OCI-LY7 (cell line): ENCODE measurements at regions of chr6 and their contacts with region 1.

Region 1: GRCh38 chr6:12011276-12012076 is 636 bp upstream of the HIVEP1 start:
- DNase-seq: peak; percentile 96
- H3K4me3 ChIP-seq: peak overlapping the region; percentile 97
- H3K27ac ChIP-seq: peak overlapping the region; percentile 39
- H3K4me1 ChIP-seq: peaks cover 28% of the 10 kb centered on the region
- CTCF ChIP-seq: no peak

Region 2: GRCh38 chr6:10534419-10534762 is 1477.1 kb before region 1 on chr6:
- CTCF ChIA-PET with region 1: no interaction called
- POLR2A ChIA-PET with region 1: no interaction called
- intact Hi-C with region 1: loop called (anchors 5 kb)
- DNase-seq: peak; percentile 87
- H3K4me3 ChIP-seq: peak overlapping the region; percentile 89
- H3K27ac ChIP-seq: peak overlapping the region; percentile 95
- H3K4me1 ChIP-seq: peaks cover 71% of the 10 kb centered on the region
- CTCF ChIP-seq: no peak

Region 3: GRCh38 chr6:11994875-11995461 is 16.5 kb before region 1 on chr6:
- CTCF ChIA-PET with region 1: no interaction called
- POLR2A ChIA-PET with region 1: interaction called, 4 read pairs
- intact Hi-C with region 1: loop called (anchors 1 kb)
- DNase-seq: no peak
- H3K4me3 ChIP-seq: no peak overlapping the region
- H3K27ac ChIP-seq: no peak overlapping the region
- H3K4me1 ChIP-seq: no peaks in the 10 kb centered on the region
- CTCF ChIP-seq: no peak

Region 4: DNA sequence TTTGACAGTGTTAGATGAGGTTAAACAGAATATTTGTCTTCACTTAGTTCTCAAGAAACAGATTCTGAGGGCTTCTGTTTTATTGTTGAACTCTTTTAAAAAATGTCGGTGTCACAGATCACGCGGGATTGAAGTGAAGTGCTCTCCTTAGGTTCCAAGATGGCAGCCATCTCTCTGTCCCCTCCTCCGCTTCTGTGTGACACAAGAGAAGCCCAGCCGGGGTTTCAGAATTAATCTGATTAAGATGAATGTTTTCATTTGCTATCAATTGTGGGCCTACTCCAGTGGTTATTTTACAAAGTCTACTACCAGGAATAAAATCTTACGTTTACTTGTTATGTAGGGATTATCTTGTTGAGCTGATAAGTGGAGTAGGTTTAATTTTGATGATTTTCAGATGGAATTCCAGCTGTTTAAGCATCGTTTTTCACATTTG is 11.5 kb after region 1 on chr6:
- CTCF ChIA-PET with region 1: no interaction called
- POLR2A ChIA-PET with region 1: interaction called, 10 read pairs
- intact Hi-C with region 1: no loop called
- DNase-seq: no peak
- H3K4me3 ChIP-seq: no peak overlapping the region
- H3K27ac ChIP-seq: no peak overlapping the region
- H3K4me1 ChIP-seq: no peaks in the 10 kb centered on the region
- CTCF ChIP-seq: no peak

Region 5: DNA sequence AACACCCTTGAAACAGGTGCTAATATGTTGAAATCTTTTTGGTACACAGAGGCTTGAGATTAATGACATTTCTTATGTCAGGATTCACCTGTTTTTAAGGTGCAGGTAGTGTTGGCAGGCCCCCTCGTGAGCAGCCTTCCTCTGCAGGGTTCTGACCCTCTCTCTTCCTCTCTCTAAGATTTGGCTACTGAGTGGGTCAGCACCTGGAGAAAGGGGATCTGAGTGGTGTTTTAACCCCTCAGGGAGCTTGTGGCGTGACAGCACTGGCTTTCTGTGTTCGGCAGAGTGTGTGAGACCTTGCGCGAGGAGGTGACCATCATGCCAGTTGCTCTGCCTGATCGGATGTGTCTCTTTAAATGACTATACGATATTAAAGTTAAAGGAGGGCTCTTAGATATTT is 37.7 kb after region 1 on chr6:
- CTCF ChIA-PET with region 1: no interaction called
- POLR2A ChIA-PET with region 1: interaction called, 3 read pairs
- intact Hi-C with region 1: loop called (anchors 2 kb)
- DNase-seq: peak; percentile 57
- H3K4me3 ChIP-seq: peak overlapping the region; percentile 35
- H3K27ac ChIP-seq: peak overlapping the region; percentile 45
- H3K4me1 ChIP-seq: peaks cover 81% of the 10 kb centered on the region
- CTCF ChIP-seq: no peak

Region 6: DNA sequence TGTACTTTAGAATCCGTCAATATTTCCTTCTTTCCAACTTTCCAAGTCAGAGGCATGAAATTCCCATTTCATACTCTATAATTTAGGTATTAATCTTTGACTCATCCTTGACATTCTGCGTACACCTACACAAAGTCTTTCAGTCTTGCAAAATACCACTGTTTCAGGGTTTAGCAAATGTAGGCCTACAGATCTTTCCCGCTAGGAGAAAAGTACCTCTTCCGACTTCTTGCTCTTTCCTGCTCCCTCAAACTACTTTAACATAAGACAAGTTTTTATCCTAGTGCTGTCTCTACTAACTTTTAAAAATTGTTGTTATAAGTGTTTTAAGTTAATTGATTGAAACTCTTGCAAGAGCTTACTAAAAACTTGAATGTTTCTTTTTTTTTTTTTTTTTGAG is 686.8 kb after region 1 on chr6:
- CTCF ChIA-PET with region 1: no interaction called
- POLR2A ChIA-PET with region 1: no interaction called
- intact Hi-C with region 1: no loop called
- DNase-seq: no peak
- H3K4me3 ChIP-seq: no peak overlapping the region
- H3K27ac ChIP-seq: no peak overlapping the region
- H3K4me1 ChIP-seq: no peaks in the 10 kb centered on the region
- CTCF ChIP-seq: no peak